Activated CD4-positive, alpha-beta T cell treated with anti-CD3 and anti-CD28 coated beads, Interleukin-2, amount 10 ng/mL, durations not matched to agents 24 days and 14 days (primary cell): ENCODE measurements at regions of chr15 and their contacts with region 1.

Region 1: DNA sequence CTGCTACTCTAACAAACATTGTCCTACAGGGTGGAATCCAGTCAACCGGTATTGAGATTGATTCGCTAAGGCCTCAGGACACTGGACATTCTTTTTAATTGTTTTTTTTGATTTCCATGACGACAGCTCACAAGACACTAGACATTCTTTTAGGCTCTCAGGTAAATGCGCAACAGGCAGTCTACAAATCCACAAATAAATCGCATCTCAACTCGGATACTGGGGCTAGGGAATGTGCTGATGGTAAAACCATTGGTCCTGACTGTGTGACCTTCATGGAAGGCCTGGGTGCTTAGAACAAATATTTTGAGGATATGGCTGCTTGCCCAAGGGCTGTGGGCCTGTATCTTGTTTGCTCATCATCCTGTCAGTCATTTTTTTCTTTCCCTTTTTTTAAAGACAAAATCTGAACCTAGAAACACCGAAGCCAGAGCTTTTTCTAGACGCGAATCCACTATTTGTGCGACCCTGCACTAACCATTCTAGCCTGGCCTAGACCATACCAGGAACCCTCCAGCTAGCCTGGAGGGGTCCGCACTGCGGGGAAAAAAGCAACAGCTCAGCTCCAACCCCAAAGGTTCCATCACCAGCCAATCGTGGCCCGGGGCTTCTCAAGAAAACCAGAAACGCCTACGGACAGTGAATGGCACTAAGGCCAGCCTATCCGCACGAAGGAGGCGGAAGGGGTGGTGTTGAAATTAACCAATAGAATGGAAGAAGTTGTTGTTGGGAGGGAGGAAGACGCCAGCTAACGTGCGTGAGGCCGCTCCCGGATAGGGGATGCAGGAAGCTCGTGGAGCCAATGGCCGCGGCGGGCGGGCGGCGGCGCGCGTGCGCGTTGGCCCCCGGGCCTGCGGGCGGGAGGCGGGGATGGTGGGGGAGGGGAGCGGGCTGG is 18.1 kb upstream of the CHD2 start:
- DNase-seq: peak; percentile 99
- H3K4me3 Mint-ChIP-seq: peak overlapping the region; percentile 95
- H3K27ac Mint-ChIP-seq: peak overlapping the region; percentile 98
- H3K4me1 Mint-ChIP-seq: peaks cover 52% of the 10 kb centered on the region
- H3K27me3 Mint-ChIP-seq: peaks cover 2% of the 10 kb centered on the region

Region 2: GRCh38 chr15:92681141-92681631 is 200.9 kb before region 1 on chr15:
- intact Hi-C with region 1: no loop called
- DNase-seq: no peak
- H3K4me3 Mint-ChIP-seq: no peak overlapping the region
- H3K27ac Mint-ChIP-seq: no peak overlapping the region
- H3K4me1 Mint-ChIP-seq: peaks cover 2% of the 10 kb centered on the region
- H3K27me3 Mint-ChIP-seq: peaks cover 22% of the 10 kb centered on the region

Region 3: DNA sequence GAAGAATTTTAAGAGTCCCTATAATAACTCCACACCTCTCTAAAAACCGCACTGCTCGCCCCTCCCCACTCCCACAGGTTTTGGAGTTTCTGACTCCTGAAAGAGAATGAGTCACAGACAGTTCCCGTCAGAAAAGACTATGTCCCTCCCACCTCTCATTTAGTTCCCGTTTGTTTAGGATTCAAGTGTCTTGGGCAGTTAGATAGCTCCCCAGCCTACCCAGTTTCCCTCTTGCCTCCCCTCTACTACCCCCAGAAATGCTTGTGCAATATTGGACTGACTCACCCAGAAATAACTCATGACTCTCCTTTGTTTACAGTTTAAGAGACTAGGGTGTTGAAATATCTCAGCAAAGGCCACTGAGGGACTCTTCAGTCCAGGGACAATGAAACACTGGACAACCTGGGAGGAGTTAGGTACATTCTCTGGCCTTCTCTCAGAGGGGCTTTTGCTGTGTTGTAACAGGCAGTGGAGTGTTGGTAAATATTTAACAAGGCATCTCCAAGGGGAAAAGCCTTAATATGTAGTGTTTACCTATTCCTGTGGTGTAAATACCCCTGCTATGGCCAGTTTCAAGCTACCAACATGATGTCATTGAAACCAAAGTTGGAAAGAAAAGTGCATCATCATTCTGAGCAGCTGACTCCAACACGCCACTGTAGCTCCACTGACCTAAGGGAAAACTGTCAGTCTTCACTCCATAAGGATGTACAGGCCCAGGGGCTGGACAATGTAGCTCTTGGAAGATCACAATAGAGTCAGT is 78.0 kb before region 1 on chr15:
- intact Hi-C with region 1: loop called (anchors 1 kb)
- DNase-seq: peak; percentile 88
- H3K4me3 Mint-ChIP-seq: peak overlapping the region; percentile 15
- H3K27ac Mint-ChIP-seq: peak overlapping the region; percentile 87
- H3K4me1 Mint-ChIP-seq: peaks cover 35% of the 10 kb centered on the region
- H3K27me3 Mint-ChIP-seq: no peaks in the 10 kb centered on the region

Region 4: GRCh38 chr15:92820236-92821021 is 61.6 kb before region 1 on chr15:
- intact Hi-C with region 1: loop called (anchors 1 kb)
- DNase-seq: peak; percentile 97
- H3K4me3 Mint-ChIP-seq: peak overlapping the region; percentile 90
- H3K27ac Mint-ChIP-seq: peak overlapping the region; percentile 96
- H3K4me1 Mint-ChIP-seq: peaks cover 52% of the 10 kb centered on the region
- H3K27me3 Mint-ChIP-seq: no peaks in the 10 kb centered on the region

Region 5: GRCh38 chr15:92848852-92849598 is 33.0 kb before region 1 on chr15:
- intact Hi-C with region 1: loop called (anchors 1 kb)
- DNase-seq: peak; percentile 80
- H3K4me3 Mint-ChIP-seq: peak overlapping the region; percentile 40
- H3K27ac Mint-ChIP-seq: peak overlapping the region; percentile 82
- H3K4me1 Mint-ChIP-seq: peaks cover 46% of the 10 kb centered on the region
- H3K27me3 Mint-ChIP-seq: no peaks in the 10 kb centered on the region

Region 6: DNA sequence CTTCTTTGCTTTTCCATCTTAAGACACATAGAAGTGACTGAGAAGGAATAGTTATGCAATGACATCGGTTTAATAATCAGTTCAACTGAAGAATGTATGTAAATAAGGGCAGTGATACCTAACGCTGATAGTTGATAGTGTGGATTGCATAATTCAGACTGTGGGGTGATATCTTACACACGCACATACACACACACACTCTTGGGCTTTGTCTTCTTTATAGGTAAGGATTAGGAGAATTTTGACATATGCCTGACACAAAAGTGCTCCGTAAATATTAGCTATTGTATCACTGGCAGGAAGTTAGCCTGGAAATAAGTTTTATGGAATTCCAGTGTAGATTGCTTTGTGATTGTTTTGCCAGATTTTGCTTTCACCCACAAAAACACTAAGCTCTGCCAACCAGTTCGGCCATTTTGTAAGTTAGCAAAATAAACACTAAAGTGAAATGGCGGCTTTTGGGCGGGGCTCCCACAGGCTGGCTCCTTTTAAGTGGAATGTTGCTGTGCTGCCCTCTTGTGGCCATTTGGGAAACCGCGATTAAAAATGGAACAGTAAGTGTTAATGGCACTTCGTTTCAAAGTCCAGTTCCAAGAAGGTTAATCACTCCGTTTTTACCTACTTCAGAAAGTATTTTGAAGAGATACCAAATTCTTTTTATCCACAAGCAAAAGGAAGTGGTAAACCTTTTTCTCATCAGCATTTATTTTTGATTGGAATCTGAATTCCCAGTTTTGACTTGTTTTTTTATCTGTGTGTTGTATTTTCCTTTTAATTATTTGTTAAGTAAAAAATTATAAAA is 35.8 kb after region 1 on chr15:
- intact Hi-C with region 1: loop called (anchors 5 kb)
- DNase-seq: peak; percentile 98
- H3K4me3 Mint-ChIP-seq: peak overlapping the region; percentile 58
- H3K27ac Mint-ChIP-seq: peak overlapping the region; percentile 75
- H3K4me1 Mint-ChIP-seq: peaks cover 78% of the 10 kb centered on the region
- H3K27me3 Mint-ChIP-seq: no peaks in the 10 kb centered on the region